ENCODE measurements at regions of chr9 and their contacts with region 1.

Region 1: DNA sequence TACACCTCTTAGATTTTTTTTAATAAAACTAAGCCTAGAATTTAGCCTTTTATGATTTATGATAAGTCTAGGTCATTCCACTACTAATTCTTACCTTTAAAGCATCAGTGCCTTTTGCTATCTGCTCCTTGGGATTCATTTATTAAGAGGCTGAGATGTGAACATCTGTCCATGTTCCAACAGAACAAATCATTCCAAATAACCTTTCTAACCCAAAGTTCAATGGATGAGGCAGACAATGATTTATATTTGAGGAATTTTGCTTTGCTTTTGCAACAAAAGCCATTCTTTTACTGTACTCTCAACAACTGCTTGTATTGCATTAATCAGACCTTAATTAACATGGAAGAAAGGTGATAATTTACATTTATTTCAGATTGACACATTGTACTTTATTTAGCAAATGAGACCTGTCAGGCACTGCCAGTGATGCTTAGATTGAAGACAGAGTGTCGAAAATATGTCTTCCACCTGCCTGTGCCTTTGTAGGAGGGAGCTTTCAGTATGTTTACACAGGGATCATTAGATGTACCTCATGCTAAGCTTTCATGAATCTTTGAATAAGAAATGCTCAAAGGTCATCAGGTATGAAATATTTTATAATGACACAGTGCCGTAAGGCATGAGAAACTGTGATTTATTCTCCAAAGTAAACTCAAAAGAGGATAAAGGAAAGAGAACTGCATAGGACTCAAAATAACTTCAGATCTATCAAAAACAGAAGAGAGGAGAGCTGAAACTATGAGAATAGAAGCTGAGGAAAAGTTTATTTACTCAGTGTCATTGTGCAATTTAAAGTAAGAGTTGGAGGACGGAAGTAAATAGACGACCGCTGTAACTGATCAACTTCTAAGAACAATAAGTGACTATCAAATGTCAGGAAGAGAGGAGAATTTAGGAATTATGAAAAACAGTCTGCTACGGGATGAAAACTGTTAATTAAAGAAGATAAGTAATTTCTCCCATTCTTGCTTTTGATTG is 36.7 kb upstream of the IZUMO3 start:
- DNase-seq: no peak
- ATAC-seq: no peak
- H3K4me3 ChIP-seq: no peak overlapping the region
- H3K27ac ChIP-seq: no peak overlapping the region
- H3K4me1 ChIP-seq: no peaks in the 10 kb centered on the region
- H3K27me3 ChIP-seq: no peaks in the 10 kb centered on the region
- CTCF ChIP-seq: no peak
- POLR2A ChIP-seq: no peak

Region 2: DNA sequence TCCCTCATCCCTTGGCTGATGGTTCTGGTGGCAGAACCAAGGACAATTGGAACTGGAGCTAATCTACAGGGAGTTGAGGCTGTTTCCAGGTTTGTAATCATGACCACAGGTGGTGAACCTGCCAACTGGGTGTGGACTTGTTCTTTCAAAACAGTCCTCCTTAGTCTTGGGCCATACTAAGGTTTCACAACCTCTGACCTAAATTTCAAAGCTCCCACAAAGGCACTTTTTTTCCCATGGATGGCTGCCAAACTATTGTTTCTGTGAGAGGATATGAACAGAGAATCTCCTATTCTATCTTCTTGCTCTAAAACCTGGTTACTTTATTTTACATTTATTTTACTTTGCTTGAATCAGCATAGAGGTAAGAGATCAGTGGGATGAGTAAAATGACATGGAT is 69.7 kb after region 1 on chr9:
- intact Hi-C with region 1: loop called in 1 of 10 experiments (anchors 10 kb)
- DNase-seq: no peak
- ATAC-seq: no peak
- H3K4me3 ChIP-seq: no peak overlapping the region
- H3K27ac ChIP-seq: no peak overlapping the region
- H3K4me1 ChIP-seq: no peaks in the 10 kb centered on the region
- H3K27me3 ChIP-seq: no peaks in the 10 kb centered on the region
- CTCF ChIP-seq: no peak
- POLR2A ChIP-seq: no peak

Measured in heart left ventricle (tissue), 16 donors.